AG04449 (cell line): ENCODE measurements at regions of chr5 and their contacts with region 1.

Region 1: GRCh38 chr5:91383027-91383955 is at the start of gene ARRDC3:
- DNase-seq: peak; percentile 59
- H3K4me3 ChIP-seq: peak within 1 kb of the TSS; percentile 86
- CTCF ChIP-seq: no peak

Region 2: GRCh38 chr5:90866333-90866732 is 517.0 kb before region 1 on chr5:
- CTCF ChIA-PET with region 1: interaction called, 28 read pairs
- POLR2A ChIA-PET with region 1: no interaction called
- DNase-seq: no peak
- H3K4me3 ChIP-seq: no peak overlapping the region
- CTCF ChIP-seq: no peak

Region 3: GRCh38 chr5:91095313-91095712 is 288.0 kb before region 1 on chr5:
- CTCF ChIA-PET with region 1: interaction called, 56 read pairs
- POLR2A ChIA-PET with region 1: interaction called, 7 read pairs
- DNase-seq: no peak
- H3K4me3 ChIP-seq: no peak overlapping the region
- CTCF ChIP-seq: no peak

Region 4: GRCh38 chr5:91214561-91214960 is 168.7 kb before region 1 on chr5:
- CTCF ChIA-PET with region 1: interaction called, 38 read pairs
- POLR2A ChIA-PET with region 1: interaction called, 6 read pairs
- DNase-seq: no peak
- H3K4me3 ChIP-seq: no peak overlapping the region
- CTCF ChIP-seq: no peak

Region 5: DNA sequence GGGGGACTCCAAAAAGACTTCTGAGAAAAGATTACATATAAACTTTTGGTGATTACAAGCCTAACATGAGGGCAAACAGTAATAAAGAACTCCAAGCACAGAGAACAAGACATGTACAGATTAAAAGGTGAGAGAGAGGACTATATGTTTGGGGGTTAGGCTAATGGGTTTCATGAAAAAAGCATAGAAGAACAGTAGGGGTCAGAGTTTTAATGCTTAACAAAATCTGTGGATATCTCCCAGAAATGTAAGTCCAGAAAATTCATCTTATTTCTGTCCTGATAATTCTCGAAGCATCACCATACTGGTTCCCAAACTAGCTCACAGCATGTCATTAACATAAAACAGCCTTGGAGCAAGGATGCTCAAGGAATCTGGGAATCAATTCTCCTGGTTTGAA is 137.4 kb before region 1 on chr5:
- CTCF ChIA-PET with region 1: interaction called, 28 read pairs
- POLR2A ChIA-PET with region 1: interaction called, 3 read pairs
- DNase-seq: no peak
- H3K4me3 ChIP-seq: no peak overlapping the region
- CTCF ChIP-seq: no peak

Region 6: DNA sequence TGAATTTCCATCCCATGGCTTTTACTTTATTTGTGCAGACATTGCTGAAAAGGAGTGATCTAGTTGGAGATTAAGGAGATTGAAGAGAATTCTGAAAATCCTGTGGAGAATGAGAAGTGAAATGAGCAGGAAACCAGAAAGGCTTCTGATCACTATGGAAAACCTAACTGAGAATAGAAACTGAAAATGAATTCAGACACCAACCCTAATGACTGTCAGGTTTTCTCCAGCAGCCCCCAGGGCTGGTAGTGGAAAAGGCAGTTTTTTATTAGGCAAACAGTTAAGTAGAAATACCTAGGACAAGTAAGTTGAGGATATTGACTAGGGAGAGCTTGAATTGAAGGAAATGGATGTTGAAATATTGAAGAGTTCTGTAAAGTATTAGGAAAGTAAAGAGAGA is 14.5 kb after region 1 on chr5:
- CTCF ChIA-PET with region 1: interaction called, 88 read pairs
- POLR2A ChIA-PET with region 1: interaction called, 4 read pairs
- DNase-seq: no peak
- H3K4me3 ChIP-seq: no peak overlapping the region
- CTCF ChIP-seq: no peak

Region 7: GRCh38 chr5:91535499-91535898 is 152.2 kb after region 1 on chr5:
- CTCF ChIA-PET with region 1: no interaction called
- POLR2A ChIA-PET with region 1: no interaction called
- DNase-seq: no peak
- H3K4me3 ChIP-seq: no peak overlapping the region
- CTCF ChIP-seq: no peak